Activated T-helper 2 cell treated with anti-CD3 and anti-CD28 coated beads, Interferon-gamma antibody, Interleukin-2, Interleukin-4, amounts not matched to agents 10 μg/mL and 5 μg/mL and 100 μg/mL, durations not matched to agents 14 hours and 24 hours and 36 hours (primary cell): ENCODE measurements at regions of chr1 and their contacts with region 1.

Region 1: GRCh38 chr1:169312084-169312954 is 55.3 kb downstream of the NME7 start:
- DNase-seq: peak; percentile 69
- H3K4me3 Mint-ChIP-seq: no peak overlapping the region
- H3K27ac Mint-ChIP-seq: peak overlapping the region; percentile 70
- H3K4me1 Mint-ChIP-seq: peaks cover 31% of the 10 kb centered on the region
- H3K27me3 Mint-ChIP-seq: no peaks in the 10 kb centered on the region

Region 2: DNA sequence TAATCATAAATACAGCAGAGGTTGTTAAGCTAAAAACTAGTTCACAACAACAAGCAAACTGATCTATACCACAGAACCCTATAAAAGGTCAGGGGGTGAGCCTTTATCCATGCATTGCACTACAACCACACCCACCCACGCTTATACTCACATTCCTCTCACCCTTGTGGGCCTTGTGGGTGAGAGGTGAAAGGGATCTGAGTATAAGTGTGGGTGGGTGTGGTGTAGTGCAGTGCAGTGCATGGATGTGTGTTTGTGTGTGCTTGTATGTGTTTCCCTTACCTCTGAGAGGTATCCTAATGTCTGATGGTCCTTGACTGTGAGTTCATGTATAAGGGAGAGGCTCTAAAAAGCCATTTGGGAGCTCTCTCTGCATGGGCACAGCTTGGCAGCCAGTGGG is 487.9 kb before region 1 on chr1:
- intact Hi-C with region 1: loop called (anchors 1 kb)
- DNase-seq: no peak
- H3K4me3 Mint-ChIP-seq: no peak overlapping the region
- H3K27ac Mint-ChIP-seq: no peak overlapping the region
- H3K4me1 Mint-ChIP-seq: peaks cover 14% of the 10 kb centered on the region
- H3K27me3 Mint-ChIP-seq: peaks cover 6% of the 10 kb centered on the region

Region 3: DNA sequence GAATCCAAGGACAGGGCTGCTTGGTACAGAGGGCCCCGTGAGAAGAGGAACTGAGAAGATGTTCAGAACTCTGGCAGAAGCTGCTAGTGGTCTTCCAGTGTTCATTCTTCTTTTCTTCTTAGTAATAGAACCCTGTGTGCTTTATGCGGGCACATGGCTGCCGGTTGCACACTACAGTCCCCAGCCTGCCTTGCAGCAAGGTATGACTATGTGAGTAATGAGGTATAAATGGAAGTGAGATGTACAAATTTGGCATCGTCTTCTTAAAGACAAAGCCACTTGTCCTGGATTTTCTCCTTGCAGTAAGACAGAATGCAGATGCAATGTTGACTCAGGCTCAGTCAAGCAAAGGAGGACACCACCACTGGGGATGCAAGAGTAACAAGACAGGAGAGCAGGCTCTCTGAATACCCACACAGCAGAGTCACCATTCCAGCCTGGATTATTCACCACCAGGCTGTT is 220.8 kb before region 1 on chr1:
- intact Hi-C with region 1: loop called (anchors 1 kb)
- DNase-seq: no peak
- H3K4me3 Mint-ChIP-seq: no peak overlapping the region
- H3K27ac Mint-ChIP-seq: no peak overlapping the region
- H3K4me1 Mint-ChIP-seq: peaks cover 8% of the 10 kb centered on the region
- H3K27me3 Mint-ChIP-seq: peaks cover 9% of the 10 kb centered on the region

Region 4: DNA sequence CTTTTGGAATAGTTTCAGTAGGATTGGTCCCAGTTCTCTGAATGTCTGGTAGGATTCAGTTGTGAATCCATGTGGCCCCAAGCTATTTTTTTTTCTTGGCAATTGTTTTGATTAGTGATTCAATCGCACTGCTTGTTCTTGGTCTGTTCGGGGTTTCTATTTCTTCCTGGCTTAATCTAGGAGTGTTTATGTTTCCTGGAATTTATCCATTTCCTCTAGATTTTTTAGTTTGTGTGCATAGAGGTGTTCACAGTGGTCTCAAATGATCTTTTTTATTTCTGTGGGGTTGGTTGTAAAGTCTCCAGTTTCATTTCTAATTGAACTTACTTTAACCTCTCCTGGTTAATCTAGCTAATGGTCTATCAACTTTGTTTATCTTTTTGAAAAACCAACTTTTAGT is 62.3 kb before region 1 on chr1:
- intact Hi-C with region 1: no loop called
- DNase-seq: no peak
- H3K4me3 Mint-ChIP-seq: no peak overlapping the region
- H3K27ac Mint-ChIP-seq: no peak overlapping the region
- H3K4me1 Mint-ChIP-seq: no peaks in the 10 kb centered on the region
- H3K27me3 Mint-ChIP-seq: no peaks in the 10 kb centered on the region

Region 5: GRCh38 chr1:169326956-169327268 is 14.6 kb after region 1 on chr1:
- intact Hi-C with region 1: loop called (anchors 2 kb)
- DNase-seq: no peak
- H3K4me3 Mint-ChIP-seq: no peak overlapping the region
- H3K27ac Mint-ChIP-seq: no peak overlapping the region
- H3K4me1 Mint-ChIP-seq: peaks cover 20% of the 10 kb centered on the region
- H3K27me3 Mint-ChIP-seq: no peaks in the 10 kb centered on the region

Region 6: GRCh38 chr1:169546087-169546995 is 234.0 kb after region 1 on chr1:
- intact Hi-C with region 1: loop called (anchors 1 kb)
- DNase-seq: peak; percentile 36
- H3K4me3 Mint-ChIP-seq: no peak overlapping the region
- H3K27ac Mint-ChIP-seq: peak overlapping the region; percentile 28
- H3K4me1 Mint-ChIP-seq: peaks cover 9% of the 10 kb centered on the region
- H3K27me3 Mint-ChIP-seq: no peaks in the 10 kb centered on the region